Activated naive CD4-positive, alpha-beta T cell treated with anti-CD3 and anti-CD28 coated beads for 36 hours (primary cell): ENCODE measurements at regions of chrX and their contacts with region 1.

Region 1: GRCh38 chrX:129522184-129523078 is 859 bp downstream of the SMARCA1 start:
- DNase-seq: peak; percentile 12
- H3K4me3 Mint-ChIP-seq: peak overlapping the region; percentile 81
- H3K27ac Mint-ChIP-seq: no peak overlapping the region
- H3K4me1 Mint-ChIP-seq: peaks cover 3% of the 10 kb centered on the region
- H3K27me3 Mint-ChIP-seq: no peaks in the 10 kb centered on the region

Region 2: DNA sequence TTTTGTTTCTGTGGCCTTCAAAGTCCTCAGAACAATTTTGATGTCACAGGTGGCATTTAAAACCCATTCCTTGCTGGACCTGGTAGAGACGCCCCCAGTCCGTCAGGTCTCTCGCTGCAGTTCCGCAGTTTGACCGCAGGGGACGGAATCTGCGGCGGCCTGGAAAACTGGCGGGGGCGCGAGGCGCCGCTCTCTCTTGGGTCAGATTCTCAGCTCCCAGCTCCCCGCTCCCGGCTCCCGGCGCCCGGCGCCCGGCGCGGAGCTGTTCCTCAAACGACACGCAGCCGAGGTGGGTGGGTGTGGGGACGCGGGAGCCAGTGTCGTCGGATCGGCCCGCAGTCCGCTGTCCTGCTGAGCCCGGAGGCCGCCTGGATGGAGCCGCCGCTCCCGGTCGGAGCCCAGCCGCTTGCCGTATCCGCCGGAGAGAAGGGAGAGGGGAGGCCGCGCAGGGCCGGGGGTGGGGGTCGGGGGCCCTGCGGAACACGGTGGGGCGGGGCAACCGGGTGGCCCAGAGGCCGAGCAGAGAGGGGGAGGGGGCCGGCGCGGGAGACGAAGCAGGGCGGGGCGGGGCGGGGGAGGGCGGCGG is 17.7 kb after region 1 on chrX and contains the start of gene OCRL:
- CTCF ChIA-PET with region 1: interaction called, 4 read pairs
- intact Hi-C with region 1: loop called (anchors 2 kb)
- DNase-seq: peak; percentile 67
- H3K4me3 Mint-ChIP-seq: peak within 1 kb of the TSS; percentile 71
- H3K27ac Mint-ChIP-seq: no peak within 1 kb of the TSS
- H3K4me1 Mint-ChIP-seq: peaks cover 5% of the 10 kb centered on the region
- H3K27me3 Mint-ChIP-seq: no peaks in the 10 kb centered on the region
- total RNA-seq, gene OCRL: 3.6 to 3.9 TPM

Region 3: GRCh38 chrX:129637217-129638109 is 115.0 kb after region 1 on chrX:
- CTCF ChIA-PET with region 1: no interaction called
- intact Hi-C with region 1: no loop called
- DNase-seq: peak; percentile 86
- H3K4me3 Mint-ChIP-seq: no peak overlapping the region
- H3K27ac Mint-ChIP-seq: no peak overlapping the region
- H3K4me1 Mint-ChIP-seq: peaks cover 1% of the 10 kb centered on the region
- H3K27me3 Mint-ChIP-seq: no peaks in the 10 kb centered on the region

Region 4: DNA sequence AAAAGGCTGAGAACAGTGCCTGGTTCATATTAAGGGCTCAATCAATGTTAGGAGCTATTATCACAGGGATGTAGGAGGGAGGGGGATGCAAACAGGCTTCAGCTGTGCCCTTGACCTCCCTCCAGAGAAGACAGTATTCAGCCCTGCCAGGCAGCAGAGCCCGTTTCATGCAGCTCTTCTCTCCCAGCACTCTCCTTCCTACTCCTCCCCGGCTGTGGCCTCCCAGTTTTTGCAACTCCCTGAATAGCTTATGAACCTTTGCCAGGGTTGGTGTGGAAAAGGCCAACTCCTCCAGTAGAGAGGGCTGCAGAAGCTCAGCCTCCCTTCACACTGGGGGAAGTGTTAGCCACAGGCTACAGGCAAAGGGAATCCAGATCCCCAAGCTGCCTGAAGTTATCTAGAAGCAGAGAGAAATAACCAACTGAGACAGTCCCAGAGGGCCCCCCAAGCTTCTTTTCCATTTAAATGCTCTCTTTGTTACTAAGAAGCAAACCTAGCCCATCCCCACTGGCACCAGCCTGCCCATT is 164.1 kb after region 1 on chrX:
- CTCF ChIA-PET with region 1: no interaction called
- intact Hi-C with region 1: no loop called
- DNase-seq: no peak
- H3K4me3 Mint-ChIP-seq: no peak overlapping the region
- H3K27ac Mint-ChIP-seq: no peak overlapping the region
- H3K4me1 Mint-ChIP-seq: no peaks in the 10 kb centered on the region
- H3K27me3 Mint-ChIP-seq: no peaks in the 10 kb centered on the region